AG04449 (cell line): ENCODE measurements at regions of chr7 and their contacts with region 1.

Region 1: DNA sequence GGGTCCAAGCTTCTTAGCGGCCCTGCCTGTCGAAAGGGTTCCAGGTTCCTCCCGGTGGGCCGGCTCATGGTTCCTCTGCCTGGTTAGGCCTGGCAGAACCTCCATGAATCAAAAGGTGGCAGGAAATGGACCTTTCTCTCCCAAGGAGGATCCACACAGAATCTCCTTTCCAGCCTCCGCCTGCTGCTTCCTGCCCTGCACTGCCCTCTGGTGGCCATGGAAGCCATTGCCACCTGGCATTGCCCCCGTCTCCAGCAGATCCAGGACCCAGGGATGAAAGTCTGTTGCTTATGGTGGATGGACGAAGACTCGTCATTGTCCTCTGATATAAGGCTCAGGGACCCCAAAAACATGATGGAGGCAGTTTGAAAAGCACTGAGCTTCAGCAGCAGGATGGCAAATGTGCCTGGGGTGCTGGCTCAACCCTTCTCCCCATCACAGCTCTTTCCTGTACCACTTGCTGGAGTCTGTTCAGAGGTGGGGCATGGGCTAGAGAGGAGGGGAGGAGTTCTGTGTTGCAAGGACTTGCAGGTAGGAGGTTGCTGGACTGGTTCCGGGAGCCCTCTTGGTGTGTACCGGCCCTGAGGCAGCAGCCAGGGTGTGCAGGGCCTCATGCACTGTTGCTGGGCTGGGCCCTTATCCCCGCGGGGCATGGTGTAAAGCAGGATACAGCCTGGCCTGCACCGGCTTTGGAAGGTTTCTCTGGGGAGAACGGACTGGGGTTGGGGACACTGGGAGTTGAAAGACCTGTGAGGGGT is 11.3 kb upstream of the INMT start:
- DNase-seq: no peak
- H3K4me3 ChIP-seq: no peak overlapping the region
- CTCF ChIP-seq: peak; percentile 97

Region 2: DNA sequence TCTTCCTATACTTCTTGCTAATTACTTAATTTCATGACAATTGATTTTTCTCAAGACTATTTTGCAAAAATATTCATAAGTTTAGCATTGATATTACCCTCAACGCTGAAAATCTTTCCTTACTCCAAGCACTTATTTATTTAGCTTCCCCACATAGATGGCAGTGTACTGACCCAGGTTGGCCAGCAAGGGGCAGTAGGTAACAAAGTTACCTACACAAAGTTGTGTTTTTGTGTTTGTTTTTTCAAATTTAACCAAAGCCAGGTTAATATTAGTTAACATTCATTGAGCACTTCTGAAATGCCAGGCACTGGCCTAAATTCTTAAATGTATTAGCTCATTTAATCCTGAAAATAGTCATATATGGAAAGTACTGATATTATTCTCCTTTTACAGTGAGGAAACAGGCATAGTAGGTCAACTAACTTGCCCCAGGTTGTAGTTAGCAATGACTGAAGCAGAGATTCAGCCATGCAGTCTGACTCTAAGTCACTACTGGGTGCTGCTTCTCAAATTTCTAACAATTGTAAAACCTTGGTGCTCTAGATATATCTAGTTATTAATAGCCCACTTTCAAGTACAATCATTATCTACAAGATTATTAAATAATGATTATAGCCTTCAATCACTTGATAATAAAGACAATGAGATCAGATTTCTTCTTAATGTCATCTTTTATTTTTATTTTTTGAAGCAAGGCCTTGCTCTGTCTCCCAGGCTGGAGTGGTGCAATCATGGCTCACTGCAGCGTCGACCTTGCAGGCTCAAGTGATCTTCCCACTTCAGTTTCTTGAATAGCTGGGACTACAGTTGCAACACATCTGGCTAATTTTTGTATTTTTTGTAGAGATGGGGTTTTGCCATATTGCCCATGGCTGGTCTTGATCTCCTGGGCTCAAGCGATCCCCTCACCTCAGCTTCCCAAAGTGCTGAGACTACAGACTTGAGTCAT is 230.2 kb before region 1 on chr7:
- CTCF ChIA-PET with region 1: interaction called, 11 read pairs
- POLR2A ChIA-PET with region 1: no interaction called
- DNase-seq: no peak
- H3K4me3 ChIP-seq: no peak overlapping the region
- CTCF ChIP-seq: peak; percentile 58

Region 3: GRCh38 chr7:30564243-30564892 is 176.2 kb before region 1 on chr7:
- CTCF ChIA-PET with region 1: interaction called, 12 read pairs
- POLR2A ChIA-PET with region 1: no interaction called
- DNase-seq: peak; percentile 36
- H3K4me3 ChIP-seq: no peak overlapping the region
- CTCF ChIP-seq: peak; percentile 88

Region 4: GRCh38 chr7:30708976-30709375 is 31.6 kb before region 1 on chr7:
- CTCF ChIA-PET with region 1: interaction called, 37 read pairs
- POLR2A ChIA-PET with region 1: no interaction called
- DNase-seq: no peak
- H3K4me3 ChIP-seq: no peak overlapping the region
- CTCF ChIP-seq: no peak

Region 5: GRCh38 chr7:30750683-30751650 is 10.4 kb after region 1 on chr7:
- CTCF ChIA-PET with region 1: interaction called, 56 read pairs
- POLR2A ChIA-PET with region 1: no interaction called
- DNase-seq: peak; percentile 70
- H3K4me3 ChIP-seq: no peak overlapping the region
- CTCF ChIP-seq: no peak

Region 6: GRCh38 chr7:30770845-30771173 is 30.2 kb after region 1 on chr7:
- CTCF ChIA-PET with region 1: interaction called, 17 read pairs
- POLR2A ChIA-PET with region 1: no interaction called
- DNase-seq: no peak
- H3K4me3 ChIP-seq: peak overlapping the region; percentile 74
- CTCF ChIP-seq: no peak

Region 7: GRCh38 chr7:30780941-30781340 is 40.3 kb after region 1 on chr7:
- CTCF ChIA-PET with region 1: no interaction called
- POLR2A ChIA-PET with region 1: no interaction called
- DNase-seq: no peak
- H3K4me3 ChIP-seq: no peak overlapping the region
- CTCF ChIP-seq: no peak